ENCODE measurements at regions of chr13 and their contacts with region 1.

Region 1: GRCh38 chr13:59521549-59521948 is 642.2 kb downstream of the DIAPH3 start:
- DNase-seq: no peak
- ATAC-seq: no peak
- H3K4me3 ChIP-seq: no peak overlapping the region
- H3K4me3 Mint-ChIP-seq: no peak overlapping the region
- H3K27ac ChIP-seq: no peak overlapping the region
- H3K27ac Mint-ChIP-seq: no peak overlapping the region
- H3K4me1 ChIP-seq: no peaks in the 10 kb centered on the region
- H3K4me1 Mint-ChIP-seq: no peaks in the 10 kb centered on the region
- H3K27me3 ChIP-seq: no peaks in the 10 kb centered on the region
- H3K27me3 Mint-ChIP-seq: no peaks in the 10 kb centered on the region
- CTCF ChIP-seq: no peak

Region 2: DNA sequence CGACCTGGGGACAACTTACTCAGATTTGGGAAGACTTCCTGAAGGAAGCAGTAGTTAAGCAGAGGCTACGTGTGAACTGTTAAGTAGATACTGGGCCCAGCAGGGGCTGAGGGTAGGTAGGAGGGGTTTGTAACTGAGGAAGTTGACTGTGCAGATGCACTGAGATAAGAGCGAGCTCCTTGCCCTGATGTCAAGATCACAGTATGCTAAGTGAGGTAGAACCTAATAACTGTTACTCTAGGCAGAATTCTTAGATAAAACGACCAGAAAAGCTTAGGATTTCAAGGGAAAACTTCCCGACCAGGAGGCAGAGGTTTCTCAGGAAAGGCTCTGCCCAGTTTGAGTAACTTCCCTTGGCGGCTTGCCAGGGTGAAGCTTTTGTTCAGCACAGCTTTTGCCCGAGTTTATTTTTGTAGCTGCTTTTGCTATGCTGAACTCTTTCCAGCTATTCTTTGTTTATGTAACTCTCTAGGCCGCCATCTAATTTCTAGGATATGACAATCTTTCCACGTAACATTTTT is 10.1 kb after region 1 on chr13:
- CTCF ChIA-PET with region 1: no interaction called
- POLR2A ChIA-PET with region 1: interaction called, 11 read pairs
- intact Hi-C with region 1: no loop called
- DNase-seq: no peak
- ATAC-seq: no peak
- H3K4me3 ChIP-seq: no peak overlapping the region
- H3K4me3 Mint-ChIP-seq: no peak overlapping the region
- H3K27ac ChIP-seq: no peak overlapping the region
- H3K27ac Mint-ChIP-seq: no peak overlapping the region
- H3K4me1 ChIP-seq: peaks cover 0 to 6% of the 10 kb centered on the region in 2 donors
- H3K4me1 Mint-ChIP-seq: no peaks in the 10 kb centered on the region
- H3K27me3 ChIP-seq: no peaks in the 10 kb centered on the region
- H3K27me3 Mint-ChIP-seq: no peaks in the 10 kb centered on the region
- CTCF ChIP-seq: no peak

Region 3: GRCh38 chr13:60363288-60363687 is 841.7 kb after region 1 on chr13:
- CTCF ChIA-PET with region 1: no interaction called
- POLR2A ChIA-PET with region 1: no interaction called
- intact Hi-C with region 1: no loop called
- DNase-seq: no peak
- ATAC-seq: no peak
- H3K4me3 ChIP-seq: no peak overlapping the region
- H3K4me3 Mint-ChIP-seq: no peak overlapping the region
- H3K27ac ChIP-seq: no peak overlapping the region
- H3K27ac Mint-ChIP-seq: no peak overlapping the region
- H3K4me1 ChIP-seq: no peaks in the 10 kb centered on the region
- H3K4me1 Mint-ChIP-seq: no peaks in the 10 kb centered on the region
- H3K27me3 ChIP-seq: peaks cover 0 to 6% (median 0%) of the 10 kb centered on the region in 4 experiments
- H3K27me3 Mint-ChIP-seq: peaks cover 20% of the 10 kb centered on the region
- CTCF ChIP-seq: no peak